MCF 10A (cell line): ENCODE measurements at regions of chr9 and their contacts with region 1.

Region 1: DNA sequence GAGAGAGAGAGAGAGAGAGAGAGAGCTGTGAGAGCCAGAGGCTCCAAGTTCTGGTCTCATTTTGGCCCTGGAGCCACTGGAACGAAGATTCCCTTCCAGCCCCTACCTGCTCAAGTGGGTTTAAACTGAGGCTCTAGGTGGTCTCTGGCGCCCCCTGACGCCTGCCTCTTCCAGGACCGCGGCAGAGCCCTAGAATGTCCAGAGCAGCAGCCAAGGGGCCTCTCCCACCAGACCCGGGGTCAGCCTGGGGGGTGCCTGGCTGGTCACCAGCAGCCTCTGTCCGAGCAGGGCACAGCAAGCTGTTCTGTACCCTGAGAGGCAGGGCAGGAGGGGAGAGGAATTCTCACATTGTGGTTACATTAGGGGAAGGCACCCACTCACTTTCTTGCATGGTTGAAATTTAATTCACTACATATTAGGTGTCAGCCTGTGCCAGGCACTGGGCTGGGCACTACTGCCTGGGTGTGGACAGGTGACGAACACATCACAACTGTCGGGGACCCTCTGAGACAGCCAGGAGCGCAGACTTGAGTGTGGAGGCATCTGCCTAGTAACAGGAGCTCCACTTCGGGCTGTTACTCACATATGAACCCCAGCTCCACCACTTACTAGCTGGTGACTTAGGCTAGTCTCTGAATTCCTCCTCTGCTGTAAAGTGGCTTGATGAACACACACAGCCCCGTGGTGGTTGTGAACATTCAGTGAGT is 44.5 kb downstream of the AMBP start:
- DNase-seq: peak; percentile 8
- H3K4me3 Mint-ChIP-seq: no peak overlapping the region
- H3K27ac Mint-ChIP-seq: no peak overlapping the region
- H3K4me1 Mint-ChIP-seq: no peaks in the 10 kb centered on the region
- H3K27me3 Mint-ChIP-seq: no peaks in the 10 kb centered on the region
- CTCF ChIP-seq: peak; percentile 33

Region 2: GRCh38 chr9:113682297-113682771 is 351.2 kb before region 1 on chr9:
- CTCF ChIA-PET with region 1: no interaction called
- POLR2A ChIA-PET with region 1: no interaction called
- intact Hi-C with region 1: loop called (anchors 1 kb)
- DNase-seq: peak; percentile 76
- H3K4me3 Mint-ChIP-seq: no peak overlapping the region
- H3K27ac Mint-ChIP-seq: no peak overlapping the region
- H3K4me1 Mint-ChIP-seq: peaks cover 5% of the 10 kb centered on the region
- H3K27me3 Mint-ChIP-seq: peaks cover 35% of the 10 kb centered on the region
- CTCF ChIP-seq: peak; percentile 93

Region 3: GRCh38 chr9:114053246-114054005 is 19.9 kb after region 1 on chr9:
- CTCF ChIA-PET with region 1: no interaction called
- POLR2A ChIA-PET with region 1: no interaction called
- intact Hi-C with region 1: no loop called
- DNase-seq: no peak
- H3K4me3 Mint-ChIP-seq: no peak overlapping the region
- H3K27ac Mint-ChIP-seq: no peak overlapping the region
- H3K4me1 Mint-ChIP-seq: no peaks in the 10 kb centered on the region
- H3K27me3 Mint-ChIP-seq: no peaks in the 10 kb centered on the region
- CTCF ChIP-seq: no peak